Activated B cell treated with CpG ODN at 0.5 μM for 24 hours (primary cell): ENCODE measurements at regions of chr13 and their contacts with region 1.

Region 1: GRCh38 chr13:110455941-110456340 is 105.6 kb downstream of the RAB20 start:
- DNase-seq: peak; percentile 50
- ATAC-seq: peak; percentile 96
- H3K4me3 Mint-ChIP-seq: peak overlapping the region; percentile 72
- H3K27ac Mint-ChIP-seq: no peak overlapping the region
- H3K4me1 Mint-ChIP-seq: peaks cover 15% of the 10 kb centered on the region
- H3K27me3 Mint-ChIP-seq: peaks cover 2% of the 10 kb centered on the region
- CTCF ChIP-seq: peak; percentile 40

Region 2: DNA sequence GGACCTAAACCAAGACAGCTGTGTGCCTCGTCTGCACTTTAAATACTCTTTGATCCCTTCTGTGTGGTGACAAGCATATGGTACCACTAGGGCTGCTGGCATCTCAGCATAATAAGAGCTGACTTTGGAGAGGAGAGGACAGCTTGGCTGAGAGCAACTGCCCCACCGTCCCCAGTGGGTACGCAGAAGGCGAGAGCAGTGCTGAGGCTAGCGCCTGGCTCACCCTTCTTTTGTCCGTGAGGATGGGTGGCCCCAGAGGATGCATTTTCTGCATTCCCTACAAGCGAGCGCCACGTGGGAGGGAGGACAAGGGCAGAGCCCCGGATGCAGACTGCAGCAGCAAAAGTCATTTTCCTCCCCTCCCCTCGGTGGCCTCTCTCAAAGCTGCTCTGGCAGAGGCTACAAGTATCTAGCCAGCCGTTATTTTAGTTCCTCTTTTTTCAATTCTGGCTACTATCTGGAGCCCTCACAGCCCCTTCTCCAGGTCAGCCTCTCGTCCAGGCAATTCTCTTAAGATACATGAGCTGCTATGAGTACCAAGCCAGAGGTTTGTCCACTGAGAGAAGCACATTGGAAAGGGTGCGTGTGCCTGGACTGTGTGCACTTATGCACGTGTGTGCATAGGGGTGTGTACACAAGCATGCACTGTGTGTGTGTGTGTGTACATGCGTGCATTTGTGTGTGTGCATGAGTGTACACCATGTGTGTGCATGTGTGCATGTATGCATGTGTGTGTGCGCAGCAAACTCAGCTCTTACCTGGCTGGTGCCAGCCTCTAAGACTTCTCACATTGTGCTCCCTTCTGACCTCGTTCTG is 54.2 kb after region 1 on chr13:
- CTCF ChIA-PET with region 1: interaction called, 4 read pairs
- POLR2A ChIA-PET with region 1: no interaction called
- intact Hi-C with region 1: loop called (anchors 5 kb)
- DNase-seq: no peak
- ATAC-seq: peak; percentile 25
- H3K4me3 Mint-ChIP-seq: no peak overlapping the region
- H3K27ac Mint-ChIP-seq: no peak overlapping the region
- H3K4me1 Mint-ChIP-seq: peaks cover 9% of the 10 kb centered on the region
- H3K27me3 Mint-ChIP-seq: no peaks in the 10 kb centered on the region
- CTCF ChIP-seq: no peak

Region 3: GRCh38 chr13:110561344-110562035 is 105.5 kb after region 1 on chr13 and contains the start of gene RAB20:
- CTCF ChIA-PET with region 1: interaction called, 6 read pairs
- POLR2A ChIA-PET with region 1: interaction called, 4 read pairs
- intact Hi-C with region 1: loop called (anchors 1 kb)
- DNase-seq: peak; percentile 57
- ATAC-seq: peak; percentile 74
- H3K4me3 Mint-ChIP-seq: peak within 1 kb of the TSS; percentile 96
- H3K27ac Mint-ChIP-seq: peak within 1 kb of the TSS; percentile 84
- H3K4me1 Mint-ChIP-seq: peaks cover 28% of the 10 kb centered on the region
- H3K27me3 Mint-ChIP-seq: peaks cover 5% of the 10 kb centered on the region
- CTCF ChIP-seq: no peak
- total RNA-seq, gene RAB20: 2.7 and 3.1 TPM in 2 replicates

Region 4: GRCh38 chr13:110644892-110645521 is 189.1 kb after region 1 on chr13:
- CTCF ChIA-PET with region 1: interaction called, 18 read pairs
- POLR2A ChIA-PET with region 1: interaction called, 5 read pairs
- intact Hi-C with region 1: loop called (anchors 1 kb)
- DNase-seq: peak; percentile 42
- ATAC-seq: peak; percentile 92
- H3K4me3 Mint-ChIP-seq: no peak overlapping the region
- H3K27ac Mint-ChIP-seq: no peak overlapping the region
- H3K4me1 Mint-ChIP-seq: peaks cover 31% of the 10 kb centered on the region
- H3K27me3 Mint-ChIP-seq: no peaks in the 10 kb centered on the region
- CTCF ChIP-seq: no peak

Region 5: GRCh38 chr13:110797230-110797877 is 341.4 kb after region 1 on chr13:
- CTCF ChIA-PET with region 1: no interaction called
- POLR2A ChIA-PET with region 1: no interaction called
- intact Hi-C with region 1: no loop called
- DNase-seq: no peak
- ATAC-seq: no peak
- H3K4me3 Mint-ChIP-seq: no peak overlapping the region
- H3K27ac Mint-ChIP-seq: no peak overlapping the region
- H3K4me1 Mint-ChIP-seq: no peaks in the 10 kb centered on the region
- H3K27me3 Mint-ChIP-seq: peaks cover 37% of the 10 kb centered on the region
- CTCF ChIP-seq: no peak

Region 6: GRCh38 chr13:110925023-110925612 is 469.2 kb after region 1 on chr13:
- CTCF ChIA-PET with region 1: interaction called, 7 read pairs
- POLR2A ChIA-PET with region 1: no interaction called
- intact Hi-C with region 1: loop called (anchors 5 kb)
- DNase-seq: no peak
- ATAC-seq: peak; percentile 28
- H3K4me3 Mint-ChIP-seq: no peak overlapping the region
- H3K27ac Mint-ChIP-seq: no peak overlapping the region
- H3K4me1 Mint-ChIP-seq: peaks cover 21% of the 10 kb centered on the region
- H3K27me3 Mint-ChIP-seq: peaks cover 13% of the 10 kb centered on the region
- CTCF ChIP-seq: no peak